Ovary (tissue), 10 donors: ENCODE measurements at regions of chr12 and their contacts with region 1.

Region 1: GRCh38 chr12:20369305-20370005 is 1.1 kb downstream of the PDE3A start:
- DNase-seq: peak; percentile 62 to 75 (median 74)
- H3K4me3 ChIP-seq: peak overlapping the region; percentile 80
- H3K27ac ChIP-seq: peak overlapping the region; percentile 77 to 86
- H3K4me1 ChIP-seq: peaks cover 2% of the 10 kb centered on the region
- H3K27me3 ChIP-seq: no peaks in the 10 kb centered on the region
- CTCF ChIP-seq: peak in 2 of 3 donors; percentile 14 to 26
- EP300 ChIP-seq: no peak
- POLR2A ChIP-seq: no peak

Region 2: GRCh38 chr12:19915392-19916195 is 453.9 kb before region 1 on chr12:
- intact Hi-C with region 1: loop called in 1 of 4 experiments (anchors 10 kb)
- DNase-seq: no peak
- H3K4me3 ChIP-seq: no peak overlapping the region
- H3K27ac ChIP-seq: no peak overlapping the region
- H3K4me1 ChIP-seq: no peaks in the 10 kb centered on the region
- H3K27me3 ChIP-seq: no peaks in the 10 kb centered on the region
- CTCF ChIP-seq: peak; percentile 9 to 68 (median 45)
- EP300 ChIP-seq: no peak
- POLR2A ChIP-seq: no peak

Region 3: DNA sequence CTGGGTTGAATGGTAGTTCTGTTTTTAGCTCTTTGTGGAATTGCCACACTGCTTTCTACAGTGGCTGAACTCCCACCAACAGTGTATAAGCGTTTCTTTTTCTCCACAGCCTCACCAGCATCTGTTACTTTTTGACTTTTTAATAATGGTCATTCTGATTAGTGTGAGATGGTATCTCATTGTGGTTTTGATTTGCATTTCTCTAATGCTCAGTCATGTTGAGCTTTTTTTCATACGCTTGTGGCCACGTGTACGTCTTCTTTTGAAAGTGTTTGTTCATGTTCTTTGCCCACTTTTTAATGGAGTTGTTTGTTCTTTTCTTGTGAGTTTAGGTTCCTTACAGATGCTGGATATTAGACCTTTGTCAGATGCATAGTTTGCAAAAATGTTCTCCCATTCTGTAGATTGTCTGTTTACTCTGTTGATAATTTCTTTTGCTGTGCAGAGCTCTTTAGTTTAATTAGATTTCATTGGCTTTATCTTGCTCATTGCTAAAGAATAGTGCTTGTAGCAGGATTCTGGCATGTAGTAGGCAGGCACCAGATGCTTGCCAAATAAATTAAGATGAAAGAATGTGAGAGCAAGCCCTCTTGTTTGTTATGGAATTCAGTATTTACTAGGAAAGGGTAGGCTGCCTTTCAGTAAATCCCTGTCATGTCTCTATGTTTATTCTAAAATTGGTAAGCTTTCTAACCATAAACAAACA is 85.7 kb after region 1 on chr12:
- intact Hi-C with region 1: no loop called
- DNase-seq: no peak
- H3K4me3 ChIP-seq: no peak overlapping the region
- H3K27ac ChIP-seq: no peak overlapping the region
- H3K4me1 ChIP-seq: no peaks in the 10 kb centered on the region
- H3K27me3 ChIP-seq: no peaks in the 10 kb centered on the region
- CTCF ChIP-seq: no peak
- EP300 ChIP-seq: no peak
- POLR2A ChIP-seq: no peak